ENCODE measurements at regions of chr11 and their contacts with region 1.

Region 1: DNA sequence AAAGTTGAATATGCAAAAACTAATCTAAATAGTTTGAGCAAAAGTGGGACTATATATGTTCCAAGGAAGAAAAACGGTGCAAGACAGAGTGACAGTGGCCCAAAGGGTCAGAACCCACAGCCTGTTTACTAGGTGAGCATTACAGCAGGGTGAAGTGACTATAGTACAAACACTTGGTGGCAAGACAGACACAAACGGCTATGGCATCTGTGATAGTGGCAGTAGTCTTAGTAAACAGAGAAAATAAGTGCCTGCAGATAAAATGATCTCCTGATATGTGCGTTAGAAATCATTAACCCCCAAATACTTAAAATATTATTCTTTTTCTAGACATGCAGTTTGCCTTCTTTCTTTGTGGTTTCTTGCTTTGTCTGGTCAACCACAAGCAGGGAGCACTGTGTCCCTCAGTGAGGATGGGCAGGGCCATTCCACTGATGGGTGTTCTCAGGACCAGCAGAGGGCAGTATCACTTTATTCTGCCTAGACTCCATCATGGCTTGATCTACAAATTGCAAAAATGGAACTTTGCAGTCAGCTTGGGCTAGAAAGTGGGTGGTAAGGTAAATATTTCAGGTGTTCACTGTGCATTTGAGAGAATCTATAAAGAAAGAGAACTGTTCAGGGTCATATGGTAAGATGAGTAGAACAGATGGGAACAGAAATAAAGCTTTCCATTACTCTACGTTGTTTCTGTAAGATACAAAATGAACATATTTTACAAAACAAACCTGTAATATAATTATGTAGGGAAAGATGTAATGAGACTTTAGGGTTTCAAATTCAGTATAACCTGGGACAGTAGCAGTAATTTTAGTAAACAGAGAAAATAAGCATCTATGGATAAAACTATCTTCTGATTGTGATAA is 198.2 kb downstream of the SWAP70 start:
- DNase-seq: peak; percentile 84
- H3K4me3 Mint-ChIP-seq: no peak overlapping the region
- H3K27ac Mint-ChIP-seq: peak overlapping the region; percentile 7
- H3K4me1 Mint-ChIP-seq: peaks cover 33% of the 10 kb centered on the region
- H3K27me3 Mint-ChIP-seq: peaks cover 1% of the 10 kb centered on the region

Region 2: DNA sequence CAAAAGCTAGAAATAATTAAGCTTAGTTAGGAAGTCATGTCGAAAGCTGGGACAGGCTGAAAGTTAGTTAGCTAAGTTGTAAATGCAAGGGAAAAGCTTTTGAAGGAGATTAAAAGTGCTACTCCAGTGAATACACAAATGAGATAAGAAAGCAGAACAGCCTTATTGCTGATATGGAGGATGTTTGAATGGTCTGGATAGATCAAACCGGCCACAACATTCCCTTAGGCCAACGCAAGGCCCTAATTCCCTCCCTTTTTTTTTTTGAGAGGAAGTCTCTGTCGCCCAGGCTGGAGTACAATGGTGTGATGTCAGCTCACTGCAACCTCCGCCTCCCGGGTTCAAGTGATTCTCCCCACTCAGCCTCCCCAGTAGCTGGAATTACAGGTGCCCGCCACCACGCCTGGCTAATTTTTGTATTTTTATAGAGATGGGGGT is 311.9 kb before region 1 on chr11:
- intact Hi-C with region 1: no loop called
- DNase-seq: peak; percentile 28
- H3K4me3 Mint-ChIP-seq: no peak overlapping the region
- H3K27ac Mint-ChIP-seq: no peak overlapping the region
- H3K4me1 Mint-ChIP-seq: peaks cover 2% of the 10 kb centered on the region
- H3K27me3 Mint-ChIP-seq: no peaks in the 10 kb centered on the region

Region 3: DNA sequence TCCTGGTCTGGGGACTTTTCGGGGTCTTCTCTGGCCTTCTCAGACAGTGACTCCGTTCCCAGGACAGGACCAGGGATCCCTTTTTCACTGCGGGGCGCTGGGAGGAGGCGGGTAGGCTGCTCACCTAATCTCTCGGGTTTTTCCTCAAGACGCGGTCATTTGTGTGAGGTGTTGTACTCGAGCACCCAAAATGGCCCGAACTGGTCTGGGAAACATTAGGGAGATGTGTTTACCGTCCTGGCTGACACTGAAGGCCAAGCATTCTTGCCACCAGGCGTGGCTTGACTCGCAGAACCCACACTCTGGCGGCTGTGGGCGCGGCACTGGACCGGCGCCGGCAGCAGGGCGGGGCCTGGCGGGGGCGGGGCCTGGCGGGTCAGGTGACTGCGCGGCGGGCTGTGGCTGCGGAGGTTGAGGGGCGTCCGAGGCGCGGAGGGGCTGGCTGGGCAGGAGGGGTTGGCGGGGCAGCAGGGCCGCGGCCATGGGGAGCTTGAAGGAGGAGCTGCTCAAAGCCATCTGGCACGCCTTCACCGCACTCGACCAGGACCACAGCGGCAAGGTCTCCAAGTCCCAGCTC is 198.3 kb before region 1 on chr11 and contains the start of gene SWAP70:
- intact Hi-C with region 1: no loop called
- DNase-seq: peak; percentile 95
- H3K4me3 Mint-ChIP-seq: peak within 1 kb of the TSS; percentile 90
- H3K27ac Mint-ChIP-seq: peak within 1 kb of the TSS; percentile 51
- H3K4me1 Mint-ChIP-seq: peaks cover 18% of the 10 kb centered on the region
- H3K27me3 Mint-ChIP-seq: peaks cover 34% of the 10 kb centered on the region
- total RNA-seq, gene SWAP70: 7.3 and 8.1 TPM in 2 replicates

Region 4: GRCh38 chr11:9840460-9841004 is 21.6 kb before region 1 on chr11:
- intact Hi-C with region 1: loop called (anchors 1 kb)
- DNase-seq: peak; percentile 71
- H3K4me3 Mint-ChIP-seq: peak overlapping the region; percentile 23
- H3K27ac Mint-ChIP-seq: peak overlapping the region; percentile 71
- H3K4me1 Mint-ChIP-seq: peaks cover 33% of the 10 kb centered on the region
- H3K27me3 Mint-ChIP-seq: no peaks in the 10 kb centered on the region

Region 5: GRCh38 chr11:9972989-9973388 is 110.9 kb after region 1 on chr11:
- intact Hi-C with region 1: loop called (anchors 1 kb)
- DNase-seq: peak; percentile 80
- H3K4me3 Mint-ChIP-seq: no peak overlapping the region
- H3K27ac Mint-ChIP-seq: no peak overlapping the region
- H3K4me1 Mint-ChIP-seq: peaks cover 4% of the 10 kb centered on the region
- H3K27me3 Mint-ChIP-seq: no peaks in the 10 kb centered on the region

Region 6: GRCh38 chr11:10076458-10077141 is 214.5 kb after region 1 on chr11:
- intact Hi-C with region 1: loop called (anchors 2 kb)
- DNase-seq: peak; percentile 79
- H3K4me3 Mint-ChIP-seq: no peak overlapping the region
- H3K27ac Mint-ChIP-seq: no peak overlapping the region
- H3K4me1 Mint-ChIP-seq: no peaks in the 10 kb centered on the region
- H3K27me3 Mint-ChIP-seq: no peaks in the 10 kb centered on the region

Region 7: DNA sequence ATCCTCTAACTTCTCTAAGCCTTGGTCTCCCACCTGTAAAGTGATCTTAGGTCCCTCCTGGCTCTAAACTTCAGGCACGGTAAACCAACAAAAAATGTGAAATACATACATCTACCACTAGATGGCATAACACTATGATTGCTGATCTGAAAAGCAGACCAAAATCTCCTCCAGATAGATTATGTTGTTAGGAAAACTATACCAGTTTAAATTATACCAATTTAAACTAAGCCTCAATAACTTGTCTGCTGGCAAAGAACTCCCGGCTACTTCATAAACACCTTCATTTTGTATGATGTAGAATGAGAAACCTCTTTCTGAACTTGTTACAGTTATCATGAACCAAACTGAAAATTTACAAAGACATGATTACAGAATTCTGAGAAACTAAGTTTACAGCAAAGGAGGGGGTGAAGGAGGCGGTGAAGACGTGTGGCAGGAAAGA is 346.1 kb after region 1 on chr11:
- intact Hi-C with region 1: loop called (anchors 5 kb)
- DNase-seq: peak; percentile 68
- H3K4me3 Mint-ChIP-seq: no peak overlapping the region
- H3K27ac Mint-ChIP-seq: no peak overlapping the region
- H3K4me1 Mint-ChIP-seq: peaks cover 1% of the 10 kb centered on the region
- H3K27me3 Mint-ChIP-seq: peaks cover 21% of the 10 kb centered on the region

Region 8: GRCh38 chr11:10293423-10294289 is 431.6 kb after region 1 on chr11 and contains the start of gene SBF2:
- intact Hi-C with region 1: no loop called
- DNase-seq: peak; percentile 93
- H3K4me3 Mint-ChIP-seq: peak within 1 kb of the TSS; percentile 82
- H3K27ac Mint-ChIP-seq: peak within 1 kb of the TSS; percentile 76
- H3K4me1 Mint-ChIP-seq: peaks cover 33% of the 10 kb centered on the region
- H3K27me3 Mint-ChIP-seq: peaks cover 51% of the 10 kb centered on the region
- total RNA-seq, gene SBF2: 7.1 and 9.1 TPM in 2 replicates

Region 9: GRCh38 chr11:10322830-10323792 is 461.0 kb after region 1 on chr11:
- intact Hi-C with region 1: loop called (anchors 5 kb)
- DNase-seq: peak; percentile 85
- H3K4me3 Mint-ChIP-seq: peak overlapping the region; percentile 62
- H3K27ac Mint-ChIP-seq: peak overlapping the region; percentile 94
- H3K4me1 Mint-ChIP-seq: peaks cover 21% of the 10 kb centered on the region
- H3K27me3 Mint-ChIP-seq: peaks cover 13% of the 10 kb centered on the region